Activated CD8-positive, alpha-beta memory T cell treated with anti-CD3 and anti-CD28 coated beads, Interleukin-2, amount 10 ng/mL, durations not matched to agents 7 days and 5 days (primary cell): ENCODE measurements at regions of chr22 and their contacts with region 1.

Region 1: DNA sequence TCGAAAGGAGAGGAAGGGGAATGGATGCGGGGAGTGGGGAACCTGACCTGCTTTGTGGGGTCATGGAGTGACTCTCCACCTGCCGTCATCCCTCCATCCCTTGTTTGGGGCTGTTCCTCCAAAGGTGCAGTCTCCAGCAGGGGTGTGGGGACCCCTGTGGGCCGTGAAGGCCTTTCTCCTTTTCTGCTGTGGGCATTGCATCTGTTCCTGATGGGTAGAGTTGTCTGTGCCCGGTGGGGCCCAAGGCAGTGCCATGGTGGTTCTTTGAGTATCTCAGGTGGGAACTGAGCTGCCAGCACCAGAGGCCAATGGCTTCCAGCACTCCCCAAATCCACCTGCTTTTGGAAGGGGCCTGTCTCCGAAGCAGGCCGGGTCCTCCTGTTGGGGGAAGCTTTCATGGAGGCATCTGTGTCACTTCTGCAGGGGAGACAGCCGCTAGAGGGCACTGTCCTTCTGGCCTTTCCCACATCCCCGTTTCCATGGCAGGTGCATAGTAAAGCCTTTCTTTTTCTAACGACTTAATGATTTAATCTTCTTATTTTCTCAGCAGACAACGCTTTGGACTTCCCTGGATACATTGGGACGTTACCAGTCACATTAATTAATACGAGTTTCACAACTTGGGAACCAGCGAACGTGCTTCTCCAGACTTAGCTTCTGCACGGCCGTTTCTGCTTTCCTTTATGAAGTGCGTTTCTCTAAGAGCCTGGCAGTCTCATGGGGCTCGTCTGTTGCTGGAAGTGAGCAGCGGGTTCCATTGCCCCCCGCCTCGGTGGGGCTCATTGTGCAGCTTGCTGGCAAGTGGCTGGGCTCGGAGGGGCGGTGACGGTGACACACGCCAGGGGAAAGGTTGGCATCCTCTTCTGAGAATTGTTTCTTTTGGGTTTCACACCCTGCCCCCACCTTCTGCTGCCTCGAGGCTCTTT is 57.1 kb downstream of the PARVB start:
- DNase-seq: peak; percentile 80
- ATAC-seq: peak; percentile 67
- H3K4me3 Mint-ChIP-seq: no peak overlapping the region
- H3K27ac Mint-ChIP-seq: no peak overlapping the region
- H3K4me1 Mint-ChIP-seq: no peaks in the 10 kb centered on the region
- H3K27me3 Mint-ChIP-seq: no peaks in the 10 kb centered on the region

Region 2: DNA sequence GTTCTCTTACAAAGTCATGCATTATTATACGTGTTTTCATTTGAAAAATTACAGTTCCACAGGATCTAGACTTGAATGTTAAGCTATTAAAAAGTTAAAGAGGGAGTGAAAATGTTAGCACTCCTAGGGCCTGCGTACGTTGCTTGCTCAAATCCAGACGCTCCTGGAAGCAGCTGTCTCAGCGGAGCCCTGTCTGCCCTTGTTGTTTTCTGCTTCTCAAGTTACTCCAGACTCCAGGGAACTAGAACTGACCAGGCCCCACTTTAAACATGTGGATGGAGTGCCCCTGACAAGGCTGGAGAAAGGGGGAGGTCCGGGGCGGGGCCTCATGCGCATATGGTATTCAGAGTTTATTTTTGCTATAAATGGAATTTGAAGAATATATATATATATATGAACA is 47.5 kb before region 1 on chr22:
- CTCF ChIA-PET with region 1: interaction called, 11 read pairs
- DNase-seq: no peak
- ATAC-seq: no peak
- H3K4me3 Mint-ChIP-seq: no peak overlapping the region
- H3K27ac Mint-ChIP-seq: no peak overlapping the region
- H3K4me1 Mint-ChIP-seq: peaks cover 21% of the 10 kb centered on the region
- H3K27me3 Mint-ChIP-seq: no peaks in the 10 kb centered on the region

Region 3: GRCh38 chr22:44242946-44243724 is 161.9 kb after region 1 on chr22:
- CTCF ChIA-PET with region 1: no interaction called
- DNase-seq: peak; percentile 15
- ATAC-seq: no peak
- H3K4me3 Mint-ChIP-seq: no peak overlapping the region
- H3K27ac Mint-ChIP-seq: no peak overlapping the region
- H3K4me1 Mint-ChIP-seq: no peaks in the 10 kb centered on the region
- H3K27me3 Mint-ChIP-seq: peaks cover 32% of the 10 kb centered on the region

Region 4: DNA sequence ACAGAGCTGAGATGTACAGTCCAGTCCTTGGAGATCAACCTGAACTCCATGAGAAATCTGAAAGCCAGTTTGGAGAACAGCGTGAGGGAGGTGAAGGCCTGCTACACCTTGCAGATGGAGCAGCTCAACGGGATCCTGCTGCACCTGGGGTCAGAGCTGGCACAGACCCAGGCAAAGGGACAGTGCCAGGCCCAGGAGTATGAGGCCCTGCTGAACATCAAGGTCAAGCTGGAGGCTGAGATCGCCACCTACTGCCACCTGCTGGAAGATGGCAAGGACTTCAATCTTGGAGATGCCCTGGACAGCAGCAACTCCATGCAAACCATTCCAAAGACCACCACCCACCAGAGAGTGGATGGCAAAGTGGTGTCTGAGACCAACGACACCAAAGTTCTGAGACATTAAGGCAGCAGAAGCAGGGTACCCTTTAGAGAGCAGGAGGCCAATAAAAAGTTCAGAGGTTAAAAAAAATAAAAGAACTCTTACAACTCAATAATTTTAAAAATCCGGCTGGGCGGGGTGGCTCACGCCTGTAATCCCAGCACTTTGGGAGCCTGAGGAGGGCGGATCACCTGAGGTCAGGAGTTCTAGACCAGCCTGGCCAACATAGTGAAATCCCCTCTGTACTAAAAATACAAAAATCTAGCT is 486.8 kb after region 1 on chr22:
- CTCF ChIA-PET with region 1: interaction called, 10 read pairs
- DNase-seq: peak; percentile 62
- ATAC-seq: no peak
- H3K4me3 Mint-ChIP-seq: no peak overlapping the region
- H3K27ac Mint-ChIP-seq: no peak overlapping the region
- H3K4me1 Mint-ChIP-seq: no peaks in the 10 kb centered on the region
- H3K27me3 Mint-ChIP-seq: peaks cover 26% of the 10 kb centered on the region